Activated CD8-positive, alpha-beta T cell treated with anti-CD3 and anti-CD28 coated beads for 36 hours (primary cell): ENCODE measurements at regions of chr11 and their contacts with region 1.

Region 1: DNA sequence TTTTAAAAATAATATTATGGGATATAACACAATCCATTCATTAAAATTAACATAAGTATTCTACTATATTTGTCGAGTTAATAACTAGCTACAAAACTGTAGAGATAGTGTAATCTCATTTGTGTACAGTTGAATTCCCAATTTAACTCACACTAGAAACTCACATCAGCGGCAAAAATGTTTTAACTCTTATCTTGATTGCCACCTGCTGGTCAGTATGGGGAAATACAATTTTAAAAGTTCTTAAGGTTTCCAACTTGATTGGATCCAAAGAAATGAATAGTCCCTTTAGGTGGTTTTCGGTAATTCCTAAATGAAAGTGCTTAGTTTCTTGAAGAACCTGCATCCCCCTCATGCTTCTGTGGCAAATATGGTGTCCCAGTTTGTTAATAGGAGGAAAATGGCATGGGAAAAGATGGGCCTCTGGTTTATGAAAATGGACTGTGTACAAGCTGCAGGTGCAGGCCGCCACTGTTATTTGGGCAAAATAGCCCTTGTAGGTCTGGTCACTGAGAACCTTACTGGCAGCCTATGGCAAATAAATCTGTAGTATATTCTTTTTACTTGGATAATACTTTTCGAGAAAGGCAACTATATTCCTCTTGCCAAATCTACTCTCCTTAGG is 33.7 kb upstream of the SLC17A6 start:
- DNase-seq: no peak
- ATAC-seq: no peak
- H3K4me3 Mint-ChIP-seq: no peak overlapping the region
- H3K27ac Mint-ChIP-seq: no peak overlapping the region
- H3K4me1 Mint-ChIP-seq: no peaks in the 10 kb centered on the region
- H3K27me3 Mint-ChIP-seq: peaks cover 6% of the 10 kb centered on the region
- CTCF ChIP-seq: peak; percentile 84

Region 2: GRCh38 chr11:22169833-22170232 is 134.6 kb before region 1 on chr11:
- CTCF ChIA-PET with region 1: no interaction called
- POLR2A ChIA-PET with region 1: no interaction called
- intact Hi-C with region 1: loop called (anchors 10 kb)
- DNase-seq: no peak
- ATAC-seq: no peak
- H3K4me3 Mint-ChIP-seq: no peak overlapping the region
- H3K27ac Mint-ChIP-seq: no peak overlapping the region
- H3K4me1 Mint-ChIP-seq: no peaks in the 10 kb centered on the region
- H3K27me3 Mint-ChIP-seq: no peaks in the 10 kb centered on the region
- CTCF ChIP-seq: peak; percentile 14

Region 3: DNA sequence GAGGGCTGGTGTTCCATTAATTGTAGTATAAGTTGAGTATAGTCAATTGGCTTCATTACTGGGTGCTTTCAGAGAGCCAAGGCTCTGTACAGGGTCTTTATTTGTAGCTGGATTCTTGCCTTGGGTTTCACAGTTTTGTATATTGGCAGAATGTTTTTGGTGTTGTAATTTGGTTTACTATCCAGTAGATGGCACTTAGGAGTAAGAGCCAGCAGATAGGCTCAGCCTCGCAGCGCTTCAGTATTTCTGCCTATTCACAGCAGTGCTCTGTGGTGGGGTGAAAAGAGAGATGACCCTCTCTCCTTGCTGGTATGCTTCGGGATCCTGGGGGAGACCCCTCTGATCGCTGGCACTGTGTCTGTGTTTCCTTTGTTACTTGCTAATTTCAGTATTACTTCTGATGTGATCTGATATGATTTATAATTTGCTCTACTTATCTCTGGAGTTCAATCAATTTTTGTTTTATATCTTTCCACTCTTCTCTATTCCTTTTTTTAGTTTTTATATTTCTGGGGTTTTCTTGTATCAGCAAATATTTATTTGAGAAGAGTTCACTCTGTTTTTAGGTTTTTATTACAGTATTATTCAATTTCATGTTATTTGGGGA is 59.4 kb before region 1 on chr11:
- CTCF ChIA-PET with region 1: interaction called, 32 read pairs
- POLR2A ChIA-PET with region 1: no interaction called
- intact Hi-C with region 1: loop called (anchors 5 kb)
- DNase-seq: peak; percentile 22
- ATAC-seq: peak; percentile 69
- H3K4me3 Mint-ChIP-seq: no peak overlapping the region
- H3K27ac Mint-ChIP-seq: no peak overlapping the region
- H3K4me1 Mint-ChIP-seq: no peaks in the 10 kb centered on the region
- H3K27me3 Mint-ChIP-seq: peaks cover 18% of the 10 kb centered on the region
- CTCF ChIP-seq: peak; percentile 56

Region 4: GRCh38 chr11:22416462-22416861 is 112.0 kb after region 1 on chr11:
- CTCF ChIA-PET with region 1: no interaction called
- POLR2A ChIA-PET with region 1: no interaction called
- intact Hi-C with region 1: no loop called
- DNase-seq: no peak
- ATAC-seq: no peak
- H3K4me3 Mint-ChIP-seq: no peak overlapping the region
- H3K27ac Mint-ChIP-seq: no peak overlapping the region
- H3K4me1 Mint-ChIP-seq: no peaks in the 10 kb centered on the region
- H3K27me3 Mint-ChIP-seq: no peaks in the 10 kb centered on the region
- CTCF ChIP-seq: no peak